ENCODE measurements at regions of chr4 and their contacts with region 1.

Region 1: DNA sequence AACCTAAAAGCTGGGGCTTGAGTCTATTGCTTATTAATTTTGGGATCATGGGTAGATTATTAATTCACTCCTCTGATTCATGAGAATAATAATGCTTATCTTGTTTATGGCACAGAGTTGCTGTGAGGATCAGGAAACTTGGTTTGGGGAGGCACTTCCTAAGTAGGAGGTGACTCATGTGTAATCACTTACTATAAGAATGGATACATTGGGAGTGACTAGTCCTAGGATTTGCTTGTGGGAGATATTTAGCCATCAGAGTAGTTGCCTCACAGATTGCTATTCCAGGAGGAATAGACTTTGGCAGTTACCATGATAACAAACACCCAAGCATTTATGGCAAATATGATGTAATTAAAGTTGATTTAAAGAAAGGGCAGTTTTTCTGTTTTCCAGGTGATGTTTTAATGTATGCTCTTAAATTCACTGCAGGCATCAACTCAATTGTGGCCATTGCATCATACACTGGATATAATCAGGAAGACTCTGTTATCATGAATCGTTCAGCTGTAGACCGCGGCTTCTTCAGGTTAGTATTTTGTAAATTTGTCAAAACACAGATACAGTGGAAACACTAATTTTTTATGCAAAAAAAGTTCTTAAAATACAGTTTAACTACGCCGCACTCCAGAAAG is 41.9 kb downstream of the POLR2B start:
- DNase-seq: peak; percentile 94
- ATAC-seq: peak; percentile 69
- H3K4me3 ChIP-seq: no peak overlapping the region
- H3K27ac ChIP-seq: no peak overlapping the region
- H3K4me1 ChIP-seq: peaks cover 8% of the 10 kb centered on the region
- H3K27me3 ChIP-seq: no peaks in the 10 kb centered on the region
- CTCF ChIP-seq: no peak
- POLR2A ChIP-seq: no peak
- RAD21 ChIP-seq: no peak

Region 2: GRCh38 chr4:57147335-57148060 is 126.9 kb after region 1 on chr4:
- CTCF ChIA-PET with region 1: no interaction called
- POLR2A ChIA-PET with region 1: interaction called, 17 read pairs
- dilution Hi-C with region 1: no loop called
- in situ Hi-C with region 1: no loop called
- intact Hi-C with region 1: no loop called
- DNase-seq: peak; percentile 75
- ATAC-seq: peak; percentile 37; the same call in 1 of the 2 replicates
- H3K4me3 ChIP-seq: no peak overlapping the region
- H3K27ac ChIP-seq: no peak overlapping the region
- H3K4me1 ChIP-seq: peaks cover 7% of the 10 kb centered on the region; the same call in 1 of the 2 replicates
- H3K27me3 ChIP-seq: no peaks in the 10 kb centered on the region
- CTCF ChIP-seq: no peak
- POLR2A ChIP-seq: no peak
- RAD21 ChIP-seq: no peak

Region 3: DNA sequence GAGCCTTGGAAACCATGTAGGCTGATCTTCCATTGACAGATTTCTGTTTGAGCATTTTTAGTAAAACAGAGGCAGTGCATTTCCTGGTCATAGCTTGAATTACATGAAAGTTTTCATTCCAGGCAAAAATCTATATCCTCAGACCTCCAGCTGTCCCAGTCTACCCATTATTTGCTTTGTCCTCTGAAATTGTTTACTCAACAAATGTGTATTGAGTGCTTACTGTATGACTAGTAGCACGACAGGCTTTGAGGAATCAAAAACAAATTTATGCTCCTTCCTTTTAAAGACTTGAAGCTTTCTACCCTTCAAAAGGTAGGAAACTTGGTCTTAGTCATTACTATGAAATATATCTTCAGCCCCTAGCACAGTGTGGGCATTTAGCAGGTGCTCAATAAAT is 397.5 kb after region 1 on chr4:
- CTCF ChIA-PET with region 1: no interaction called
- POLR2A ChIA-PET with region 1: no interaction called
- dilution Hi-C with region 1: no loop called
- in situ Hi-C with region 1: no loop called
- intact Hi-C with region 1: no loop called
- DNase-seq: no peak
- ATAC-seq: no peak
- H3K4me3 ChIP-seq: no peak overlapping the region
- H3K27ac ChIP-seq: no peak overlapping the region
- H3K4me1 ChIP-seq: no peaks in the 10 kb centered on the region
- H3K27me3 ChIP-seq: no peaks in the 10 kb centered on the region
- CTCF ChIP-seq: no peak
- POLR2A ChIP-seq: no peak
- RAD21 ChIP-seq: no peak